Activated T-helper 1 cell treated with anti-CD3 and anti-CD28 coated beads, Interleukin-12 subunit alpha, Interleukin-12 subunit beta, Interleukin-2, Interleukin-4 antibody, amounts not matched to agents 30 ng/mL and 10 ng/mL and 1 ng/mL, durations not matched to agents 14 hours and 24 hours and 36 hours (primary cell): ENCODE measurements at regions of chr9 and their contacts with region 1.

Region 1: DNA sequence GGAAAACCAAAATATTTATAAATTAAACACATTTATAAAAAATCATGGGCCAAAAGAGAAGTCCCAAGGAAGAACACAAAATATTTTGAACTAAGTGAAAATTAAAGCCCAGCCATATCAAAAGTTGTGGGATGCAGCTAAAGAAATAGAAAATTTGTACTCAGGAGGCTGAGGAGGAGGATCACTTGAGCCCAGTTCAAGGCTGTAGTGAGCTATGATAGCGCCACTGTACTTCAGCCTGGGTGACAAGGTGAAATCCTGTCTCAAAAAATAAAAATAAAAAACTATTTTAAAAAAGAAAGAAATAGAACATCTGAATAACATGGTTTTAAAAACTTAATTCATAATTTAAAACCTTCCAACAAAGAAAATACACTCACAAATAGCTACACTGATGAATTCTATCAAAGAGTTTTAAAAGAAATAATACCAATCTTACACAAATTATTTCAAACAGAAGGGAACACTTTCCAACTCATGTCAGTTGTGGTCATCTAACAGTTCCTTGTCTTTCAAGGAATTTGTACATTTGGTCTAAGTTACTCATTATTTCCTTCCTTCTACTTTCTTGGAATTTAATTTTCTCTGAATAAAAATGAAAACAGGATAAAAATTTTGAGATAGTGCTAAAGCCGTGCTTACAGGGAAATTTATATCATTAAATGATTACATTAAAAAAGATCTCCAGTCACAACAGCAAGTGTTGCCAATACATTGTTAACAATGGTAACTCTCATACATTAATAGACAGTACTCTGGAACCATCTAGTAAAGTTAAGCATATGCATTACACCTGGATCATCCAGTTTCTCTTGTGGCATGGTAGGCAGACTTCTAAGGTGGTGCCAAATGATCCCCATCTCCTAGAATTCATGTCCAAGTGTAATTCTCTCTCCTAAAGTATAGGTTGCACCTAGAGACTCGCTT is 17.8 kb downstream of the PTBP3 start:
- DNase-seq: no peak
- H3K4me3 Mint-ChIP-seq: peak overlapping the region; percentile 46
- H3K27ac Mint-ChIP-seq: peak overlapping the region; percentile 79
- H3K4me1 Mint-ChIP-seq: peaks cover 52% of the 10 kb centered on the region
- H3K27me3 Mint-ChIP-seq: peaks cover 1% of the 10 kb centered on the region

Region 2: DNA sequence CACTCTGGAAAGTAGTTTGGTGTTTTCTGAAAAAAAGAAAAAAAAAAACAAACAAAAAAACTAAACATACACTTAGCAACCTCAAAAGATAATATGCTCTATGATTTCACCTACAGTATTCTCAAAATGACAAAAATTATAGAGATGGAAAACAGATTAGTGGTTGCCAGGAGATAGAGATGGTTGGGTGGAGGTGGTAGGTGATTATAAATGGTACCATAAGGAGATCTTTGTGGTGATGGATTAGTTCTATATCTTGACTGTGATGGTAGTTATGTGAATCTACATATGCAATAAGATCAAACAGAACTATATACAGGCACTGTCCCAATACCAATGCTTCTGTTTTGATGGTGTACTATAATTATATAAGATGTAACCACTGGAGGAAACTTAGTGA is 14.2 kb before region 1 on chr9:
- intact Hi-C with region 1: loop called (anchors 1 kb)
- DNase-seq: no peak
- H3K4me3 Mint-ChIP-seq: no peak overlapping the region
- H3K27ac Mint-ChIP-seq: peak overlapping the region; percentile 50
- H3K4me1 Mint-ChIP-seq: peaks cover 38% of the 10 kb centered on the region
- H3K27me3 Mint-ChIP-seq: no peaks in the 10 kb centered on the region

Region 3: DNA sequence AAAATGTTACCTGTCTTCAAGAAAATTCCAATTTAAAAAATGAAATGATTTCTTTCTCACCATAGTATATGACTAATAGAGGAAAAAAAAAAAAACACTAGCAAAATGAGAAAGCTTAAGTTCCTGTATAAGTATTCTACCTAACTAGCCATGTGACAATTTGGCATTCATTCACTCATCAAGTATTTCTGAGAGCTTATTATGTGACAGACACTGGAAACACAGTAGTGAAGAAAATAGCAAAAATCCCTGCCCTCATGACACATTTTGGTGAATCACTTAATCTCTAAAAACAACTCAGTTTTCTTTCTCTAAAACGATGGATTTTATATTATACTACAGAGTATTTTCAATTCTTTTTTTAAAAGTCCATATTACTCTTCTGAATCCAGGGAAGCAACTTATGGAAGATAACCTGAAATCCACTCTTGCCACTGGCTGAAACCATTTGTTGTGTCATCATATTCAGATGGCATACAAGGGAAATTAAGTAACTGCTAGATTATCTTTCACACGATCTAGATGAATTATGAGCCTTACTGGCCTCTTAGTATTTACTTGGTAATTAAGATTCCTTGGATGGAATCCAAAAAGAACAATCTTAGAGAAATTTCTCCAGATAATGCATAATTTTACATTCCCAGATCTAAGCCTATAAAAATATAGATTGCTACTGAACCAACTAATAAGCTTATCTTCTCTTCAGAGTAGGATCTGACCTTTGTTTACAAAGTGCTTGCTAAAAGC is 12.3 kb after region 1 on chr9:
- intact Hi-C with region 1: loop called (anchors 1 kb)
- DNase-seq: no peak
- H3K4me3 Mint-ChIP-seq: no peak overlapping the region
- H3K27ac Mint-ChIP-seq: peak overlapping the region; percentile 43
- H3K4me1 Mint-ChIP-seq: peaks cover 56% of the 10 kb centered on the region
- H3K27me3 Mint-ChIP-seq: no peaks in the 10 kb centered on the region